Posterior vena cava (tissue), 2 donors: ENCODE measurements at regions of chr4 and their contacts with region 1.

Region 1: GRCh38 chr4:93578942-93579341 is 249.6 kb upstream of the ATOH1 start:
- DNase-seq: no peak

Region 2: DNA sequence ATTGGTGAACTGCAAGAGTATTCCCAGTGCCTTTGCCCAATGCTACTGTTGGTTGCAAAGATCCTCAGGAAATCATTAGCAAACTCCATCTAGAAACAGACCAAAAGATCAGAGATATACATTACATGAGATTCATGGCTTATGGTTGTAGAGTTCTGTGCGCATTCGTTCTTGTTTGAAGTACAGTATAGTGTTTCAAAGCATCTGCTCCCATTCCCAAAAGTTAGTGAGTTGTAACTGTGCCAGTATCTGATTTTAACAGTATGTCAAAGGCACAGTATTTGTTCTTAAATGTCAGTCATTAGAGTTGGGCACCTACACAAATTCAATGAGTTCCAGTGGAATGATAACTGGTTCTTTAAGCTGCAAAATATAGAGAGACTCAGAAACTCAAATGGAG is 65.1 kb before region 1 on chr4:
- intact Hi-C with region 1: loop called in 1 of 2 experiments (anchors 2 kb)
- DNase-seq: no peak

Region 3: DNA sequence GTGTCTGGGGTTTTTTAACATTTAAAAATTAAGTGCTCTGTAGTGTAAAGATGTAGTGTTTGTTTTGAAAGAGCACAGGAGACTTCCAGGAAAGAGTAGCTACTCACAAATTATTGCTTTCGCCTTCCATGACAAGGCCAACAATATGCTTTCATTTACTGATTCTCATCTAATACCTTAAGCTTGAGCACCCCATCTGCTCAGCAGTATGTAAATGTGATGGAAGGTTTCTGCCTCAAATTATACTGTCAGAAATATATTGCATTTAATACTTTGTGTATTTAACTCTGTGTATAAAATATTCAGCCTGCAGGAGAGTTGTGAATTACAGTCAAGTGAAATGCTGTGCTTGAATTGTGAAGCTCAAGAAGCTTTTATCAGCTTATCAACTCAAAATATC is 46.7 kb before region 1 on chr4:
- intact Hi-C with region 1: no loop called
- DNase-seq: no peak

Region 4: GRCh38 chr4:93658443-93658842 is 79.5 kb after region 1 on chr4:
- intact Hi-C with region 1: no loop called
- DNase-seq: no peak

Region 5: GRCh38 chr4:95428291-95429085 is 1849.5 kb after region 1 on chr4:
- intact Hi-C with region 1: no loop called
- DNase-seq: no peak